Endothelial cell of umbilical vein (primary cell): ENCODE measurements at regions of chr9 and their contacts with region 1.

Region 1: GRCh38 chr9:23702311-23702922 is 123.6 kb downstream of the ELAVL2 start:
- DNase-seq: no peak
- H3K4me3 ChIP-seq: no peak overlapping the region
- H3K27ac ChIP-seq: no peak overlapping the region
- H3K4me1 ChIP-seq: no peaks in the 10 kb centered on the region
- H3K27me3 ChIP-seq: no peaks in the 10 kb centered on the region
- CTCF ChIP-seq: no peak
- POLR2A ChIP-seq: no peak

Region 2: GRCh38 chr9:23492126-23493002 is 210.1 kb before region 1 on chr9:
- CTCF ChIA-PET with region 1: no interaction called
- POLR2A ChIA-PET with region 1: no interaction called
- dilution Hi-C with region 1: no loop called
- intact Hi-C with region 1: loop called (anchors 1 kb)
- DNase-seq: peak; percentile 64
- H3K4me3 ChIP-seq: no peak overlapping the region
- H3K27ac ChIP-seq: no peak overlapping the region
- H3K4me1 ChIP-seq: no peaks in the 10 kb centered on the region
- H3K27me3 ChIP-seq: no peaks in the 10 kb centered on the region
- CTCF ChIP-seq: peak; percentile 45 to 55
- POLR2A ChIP-seq: no peak

Region 3: GRCh38 chr9:24218656-24219055 is 516.2 kb after region 1 on chr9:
- CTCF ChIA-PET with region 1: no interaction called
- POLR2A ChIA-PET with region 1: no interaction called
- dilution Hi-C with region 1: no loop called
- intact Hi-C with region 1: no loop called
- DNase-seq: no peak
- H3K4me3 ChIP-seq: no peak overlapping the region
- H3K27ac ChIP-seq: no peak overlapping the region
- H3K4me1 ChIP-seq: no peaks in the 10 kb centered on the region
- H3K27me3 ChIP-seq: no peaks in the 10 kb centered on the region
- CTCF ChIP-seq: no peak
- POLR2A ChIP-seq: no peak